IMR-90 (cell line): ENCODE measurements at regions of chr2 and their contacts with region 1.

Region 1: GRCh38 chr2:199979832-199980628 is 24.6 kb downstream of the MAIP1 start:
- DNase-seq: peak; percentile 77
- ATAC-seq: peak; percentile 73
- H3K4me3 ChIP-seq: no peak overlapping the region
- H3K27ac ChIP-seq: peak overlapping the region; percentile 30
- H3K4me1 ChIP-seq: peaks cover 9% of the 10 kb centered on the region
- H3K27me3 ChIP-seq: no peaks in the 10 kb centered on the region
- CTCF ChIP-seq: peak; percentile 91
- POLR2A ChIP-seq: no peak
- RAD21 ChIP-seq: peak; percentile 87

Region 2: DNA sequence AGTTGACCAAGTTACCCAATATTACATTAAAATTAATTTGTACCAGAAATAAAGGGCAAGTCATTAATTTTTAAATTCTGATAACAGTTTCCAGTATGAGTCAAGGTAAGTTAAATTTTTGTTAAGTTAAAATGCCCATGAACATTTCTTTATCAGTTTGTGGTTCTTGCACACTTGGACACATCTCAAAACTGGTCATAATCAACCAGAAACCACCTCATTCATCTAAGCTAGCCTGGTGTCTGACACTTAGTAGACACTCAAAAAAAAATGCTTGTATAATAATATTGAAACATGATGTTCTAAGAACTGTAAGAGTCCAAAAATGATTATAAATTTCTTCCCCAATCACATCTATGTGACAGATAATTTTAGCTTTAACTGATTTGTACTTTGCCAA is 584.7 kb before region 1 on chr2:
- CTCF ChIA-PET with region 1: no interaction called
- POLR2A ChIA-PET with region 1: no interaction called
- dilution Hi-C with region 1: no loop called
- in situ Hi-C with region 1: no loop called
- intact Hi-C with region 1: no loop called
- DNase-seq: peak; percentile 11
- ATAC-seq: no peak
- H3K4me3 ChIP-seq: no peak overlapping the region
- H3K27ac ChIP-seq: no peak overlapping the region
- H3K4me1 ChIP-seq: peaks cover 2% of the 10 kb centered on the region; the same call in 1 of the 2 replicates
- H3K27me3 ChIP-seq: no peaks in the 10 kb centered on the region
- CTCF ChIP-seq: no peak
- POLR2A ChIP-seq: no peak
- RAD21 ChIP-seq: no peak

Region 3: GRCh38 chr2:199861132-199861774 is 118.8 kb before region 1 on chr2:
- CTCF ChIA-PET with region 1: no interaction called
- POLR2A ChIA-PET with region 1: no interaction called
- dilution Hi-C with region 1: no loop called
- in situ Hi-C with region 1: no loop called
- intact Hi-C with region 1: no loop called
- DNase-seq: peak; percentile 38
- ATAC-seq: peak; percentile 63
- H3K4me3 ChIP-seq: no peak overlapping the region
- H3K27ac ChIP-seq: no peak overlapping the region
- H3K4me1 ChIP-seq: no peaks in the 10 kb centered on the region
- H3K27me3 ChIP-seq: peaks cover 12% of the 10 kb centered on the region
- CTCF ChIP-seq: peak; percentile 64
- POLR2A ChIP-seq: no peak
- RAD21 ChIP-seq: peak; percentile 57

Region 4: GRCh38 chr2:200110381-200110780 is 130.4 kb after region 1 on chr2:
- CTCF ChIA-PET with region 1: no interaction called
- POLR2A ChIA-PET with region 1: no interaction called
- dilution Hi-C with region 1: no loop called
- in situ Hi-C with region 1: no loop called
- intact Hi-C with region 1: no loop called
- DNase-seq: no peak
- ATAC-seq: no peak
- H3K4me3 ChIP-seq: no peak overlapping the region
- H3K27ac ChIP-seq: no peak overlapping the region
- H3K4me1 ChIP-seq: no peaks in the 10 kb centered on the region
- H3K27me3 ChIP-seq: no peaks in the 10 kb centered on the region
- CTCF ChIP-seq: no peak
- POLR2A ChIP-seq: no peak
- RAD21 ChIP-seq: no peak

Region 5: DNA sequence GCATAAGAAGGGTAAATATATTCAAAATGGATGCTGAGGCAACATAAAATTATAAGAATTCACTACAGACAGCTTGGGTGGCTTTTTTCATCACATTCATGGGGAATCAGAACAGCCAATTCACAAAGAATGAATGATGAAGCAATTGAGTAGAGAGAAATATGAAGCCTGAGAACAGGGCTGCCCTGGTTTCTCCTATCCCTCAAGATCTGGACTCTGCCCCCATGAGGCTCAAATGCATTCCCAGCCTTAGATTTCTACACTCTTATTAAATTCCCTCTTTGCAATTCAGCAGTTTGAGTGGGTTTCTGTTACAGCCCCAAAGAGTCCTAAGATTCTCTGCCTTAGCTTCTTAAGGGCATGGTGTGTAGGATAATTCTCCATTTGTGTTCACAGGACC is 147.8 kb after region 1 on chr2:
- CTCF ChIA-PET with region 1: no interaction called
- POLR2A ChIA-PET with region 1: no interaction called
- dilution Hi-C with region 1: no loop called
- in situ Hi-C with region 1: no loop called
- intact Hi-C with region 1: loop called (anchors 2 kb)
- DNase-seq: peak; percentile 67
- ATAC-seq: peak; percentile 88
- H3K4me3 ChIP-seq: no peak overlapping the region
- H3K27ac ChIP-seq: peak overlapping the region; percentile 39; the same call in 1 of the 2 replicates
- H3K4me1 ChIP-seq: peaks cover 13% of the 10 kb centered on the region
- H3K27me3 ChIP-seq: no peaks in the 10 kb centered on the region
- CTCF ChIP-seq: peak; percentile 28; the same call in 1 of the 2 replicates
- POLR2A ChIP-seq: no peak
- RAD21 ChIP-seq: no peak

Region 6: DNA sequence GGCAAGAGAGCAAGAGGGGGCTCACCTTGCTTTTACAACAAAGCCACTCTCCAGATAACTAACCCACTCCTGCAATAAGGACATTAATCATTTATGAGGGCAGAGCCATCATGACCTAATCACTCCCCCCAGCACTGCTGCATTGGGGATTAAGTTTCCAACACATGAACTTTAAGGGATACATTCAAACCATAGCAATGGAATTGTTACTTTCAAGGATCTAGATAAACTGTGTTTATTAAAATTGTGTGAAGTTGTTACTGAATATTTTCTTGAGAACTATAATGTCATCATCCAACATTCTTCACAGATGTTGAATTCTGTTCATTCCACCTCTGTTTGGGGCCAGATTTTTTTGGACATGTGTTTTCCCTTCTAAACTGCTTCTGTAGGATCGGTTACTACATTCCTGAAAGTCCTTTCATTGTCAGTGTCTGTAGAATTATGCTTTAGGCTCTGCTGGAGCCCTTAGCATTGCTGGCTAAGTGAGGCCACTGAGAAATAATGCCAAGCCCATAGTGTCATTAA is 376.9 kb after region 1 on chr2:
- CTCF ChIA-PET with region 1: no interaction called
- POLR2A ChIA-PET with region 1: no interaction called
- dilution Hi-C with region 1: no loop called
- in situ Hi-C with region 1: no loop called
- intact Hi-C with region 1: loop called (anchors 5 kb)
- DNase-seq: peak; percentile 78
- ATAC-seq: peak; percentile 88
- H3K4me3 ChIP-seq: no peak overlapping the region
- H3K27ac ChIP-seq: peak overlapping the region; percentile 80; the same call in 1 of the 2 replicates
- H3K4me1 ChIP-seq: peaks cover 23% of the 10 kb centered on the region
- H3K27me3 ChIP-seq: no peaks in the 10 kb centered on the region
- CTCF ChIP-seq: no peak
- POLR2A ChIP-seq: no peak
- RAD21 ChIP-seq: no peak

Region 7: DNA sequence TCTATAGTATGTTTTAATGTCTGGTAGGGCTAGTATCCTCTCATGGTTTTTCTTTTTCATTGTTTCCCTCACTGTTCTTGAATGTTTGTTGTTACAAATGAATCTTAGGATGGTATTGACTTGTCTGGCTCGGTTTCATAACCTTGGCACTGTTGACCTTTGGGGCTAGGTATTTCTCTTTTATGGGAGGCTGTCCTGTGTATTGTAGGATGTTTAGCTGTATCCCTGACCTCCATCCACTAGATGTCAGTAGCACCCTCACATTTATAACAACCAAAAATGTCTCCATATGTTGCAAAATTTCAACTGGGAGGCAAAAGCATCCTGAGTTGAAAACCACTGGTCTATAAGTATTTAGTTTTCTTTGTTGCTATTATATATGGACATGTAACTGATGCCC is 598.7 kb after region 1 on chr2:
- CTCF ChIA-PET with region 1: no interaction called
- POLR2A ChIA-PET with region 1: no interaction called
- dilution Hi-C with region 1: no loop called
- in situ Hi-C with region 1: no loop called
- intact Hi-C with region 1: loop called (anchors 10 kb)
- DNase-seq: peak; percentile 35
- ATAC-seq: peak; percentile 37; the same call in 1 of the 2 replicates
- H3K4me3 ChIP-seq: no peak overlapping the region
- H3K27ac ChIP-seq: no peak overlapping the region
- H3K4me1 ChIP-seq: no peaks in the 10 kb centered on the region
- H3K27me3 ChIP-seq: no peaks in the 10 kb centered on the region
- CTCF ChIP-seq: peak; percentile 46
- POLR2A ChIP-seq: no peak
- RAD21 ChIP-seq: peak; percentile 64